GM12878 (cell line): ENCODE measurements at regions of chr13 and their contacts with region 1.

Region 1: GRCh38 chr13:77740931-77741596 is 43.6 kb downstream of the SLAIN1 start:
- DNase-seq: no peak
- ATAC-seq: no peak
- H3K4me3 ChIP-seq: no peak overlapping the region
- H3K27ac ChIP-seq: no peak overlapping the region
- H3K4me1 ChIP-seq: peaks cover 3% of the 10 kb centered on the region; the same call in 1 of the 2 replicates
- H3K27me3 ChIP-seq: no peaks in the 10 kb centered on the region
- CTCF ChIP-seq: no peak
- EP300 ChIP-seq: no peak
- POLR2A ChIP-seq: no peak
- RAD21 ChIP-seq: no peak

Region 2: DNA sequence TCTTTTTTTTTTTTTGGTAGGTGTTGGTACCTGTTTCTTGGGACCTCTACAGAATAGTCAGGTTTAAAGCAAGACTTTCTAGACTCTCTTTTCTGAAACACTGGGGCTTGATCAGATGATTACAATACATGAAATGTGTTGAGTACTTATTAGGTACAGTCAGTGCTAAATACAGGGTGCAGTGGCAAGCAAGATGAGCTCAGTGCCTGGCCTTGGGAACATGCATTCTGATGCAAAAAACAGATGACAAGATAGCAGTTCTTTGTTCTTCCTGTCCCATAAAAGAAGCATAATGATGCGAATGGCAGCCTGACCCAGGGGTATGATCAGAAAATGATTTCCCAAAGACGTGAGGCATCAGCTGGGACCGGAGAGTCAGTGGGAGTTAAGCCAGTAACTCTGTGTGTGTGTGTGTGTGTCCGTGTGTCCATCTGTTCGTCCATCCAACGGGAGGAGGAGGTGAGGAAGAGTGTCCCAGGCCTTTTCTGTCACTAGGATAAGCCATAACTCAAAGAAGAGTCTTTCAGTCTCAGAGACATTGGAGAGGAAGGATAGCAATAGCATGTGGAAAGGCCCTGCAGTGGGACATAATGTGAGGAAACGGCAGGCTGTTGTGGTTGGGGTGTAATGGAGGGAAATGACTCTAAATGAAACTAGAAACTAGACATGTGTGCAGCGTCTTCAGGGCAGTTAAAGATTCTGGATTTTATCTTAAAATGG is 11.4 kb before region 1 on chr13:
- CTCF ChIA-PET with region 1: interaction called, 6 read pairs
- POLR2A ChIA-PET with region 1: interaction called, 6 read pairs
- RAD21 ChIA-PET with region 1: no interaction called
- SMC1A ChIA-PET with region 1: interaction called, 12 read pairs
- in situ Hi-C with region 1: no loop called
- intact Hi-C with region 1: no loop called
- DNase-seq: peak; percentile 64
- ATAC-seq: peak; percentile 97
- H3K4me3 ChIP-seq: peak overlapping the region; percentile 12; the same call in 1 of the 2 replicates
- H3K27ac ChIP-seq: peak overlapping the region; percentile 56
- H3K4me1 ChIP-seq: peaks cover 18% of the 10 kb centered on the region
- H3K27me3 ChIP-seq: no peaks in the 10 kb centered on the region
- CTCF ChIP-seq: no peak
- EP300 ChIP-seq: peak; percentile 78 to 89
- POLR2A ChIP-seq: no peak
- RAD21 ChIP-seq: peak; percentile 7; the same call in 1 of the 2 replicates